Brain microvascular endothelial cell (primary cell): ENCODE measurements at regions of chr9 and their contacts with region 1.

Region 1: DNA sequence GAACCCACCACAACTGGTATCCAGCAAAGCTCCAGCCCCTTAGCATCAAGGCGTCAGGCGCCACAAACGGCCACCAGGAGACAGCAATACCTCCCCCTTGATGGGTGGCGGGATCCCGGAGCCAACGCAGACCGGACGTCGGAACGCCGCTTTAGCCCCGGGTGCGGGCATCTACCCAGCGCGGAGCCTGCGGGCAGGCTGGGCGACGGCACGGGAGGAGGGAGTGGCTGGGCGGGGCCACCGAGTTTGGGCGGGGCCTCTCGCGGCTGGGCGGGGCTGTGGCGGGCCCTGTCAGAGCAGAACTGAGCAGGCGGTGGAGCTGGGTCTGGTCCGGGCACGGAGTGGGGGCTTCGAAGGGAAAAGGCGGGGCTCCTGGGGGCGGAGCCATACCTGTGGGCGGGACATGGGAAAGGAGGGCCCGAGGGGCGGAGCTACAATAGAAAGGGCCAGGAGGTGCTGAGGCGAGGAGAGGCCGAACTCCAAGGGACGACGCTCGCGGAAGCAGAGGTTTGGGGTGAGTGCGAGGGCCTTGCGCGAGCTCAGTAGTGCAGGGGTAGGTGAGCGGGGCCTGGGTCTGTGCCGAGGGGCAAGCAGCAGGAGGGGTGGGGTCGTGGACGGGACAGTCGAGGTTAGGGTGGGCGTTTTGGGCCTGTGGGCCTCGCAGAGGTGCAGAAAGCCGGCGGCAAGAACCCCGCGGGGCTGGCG is 40.2 kb upstream of the GARNL3 start:
- DNase-seq: peak; percentile 75
- H3K4me3 ChIP-seq: peak overlapping the region; percentile 56
- H3K27ac ChIP-seq: no peak overlapping the region
- H3K27me3 ChIP-seq: peaks cover 6% of the 10 kb centered on the region
- CTCF ChIP-seq: peak; percentile 49

Region 2: GRCh38 chr9:126965541-126966428 is 258.5 kb before region 1 on chr9:
- in situ Hi-C with region 1: loop called (anchors 25 kb)
- DNase-seq: peak; percentile 53
- H3K4me3 ChIP-seq: no peak overlapping the region
- H3K27ac ChIP-seq: no peak overlapping the region
- H3K27me3 ChIP-seq: no peaks in the 10 kb centered on the region
- CTCF ChIP-seq: peak; percentile 97

Region 3: DNA sequence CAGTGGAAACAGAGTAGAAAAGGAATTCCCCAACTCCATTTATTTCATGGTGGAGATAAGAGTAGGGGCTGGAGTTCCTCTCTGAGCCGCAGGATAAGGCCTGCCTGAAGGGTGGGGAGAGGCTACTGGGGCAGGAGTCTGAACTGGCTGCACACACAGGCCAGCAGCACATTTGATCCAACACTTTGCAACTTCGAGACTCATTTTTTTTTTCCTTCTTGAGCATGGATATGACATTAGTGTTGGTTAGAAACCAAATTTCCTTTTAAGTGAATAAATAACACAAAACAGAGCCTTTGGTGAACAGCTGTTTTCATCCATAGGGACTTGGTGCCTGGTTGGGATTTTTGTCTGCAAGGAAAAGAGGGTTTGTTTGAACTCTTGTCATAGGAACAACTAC is 233.1 kb before region 1 on chr9:
- in situ Hi-C with region 1: no loop called
- DNase-seq: no peak
- H3K4me3 ChIP-seq: no peak overlapping the region
- H3K27ac ChIP-seq: no peak overlapping the region
- H3K27me3 ChIP-seq: no peaks in the 10 kb centered on the region
- CTCF ChIP-seq: no peak